ENCODE measurements at regions of chr22 and their contacts with region 1.

Region 1: DNA sequence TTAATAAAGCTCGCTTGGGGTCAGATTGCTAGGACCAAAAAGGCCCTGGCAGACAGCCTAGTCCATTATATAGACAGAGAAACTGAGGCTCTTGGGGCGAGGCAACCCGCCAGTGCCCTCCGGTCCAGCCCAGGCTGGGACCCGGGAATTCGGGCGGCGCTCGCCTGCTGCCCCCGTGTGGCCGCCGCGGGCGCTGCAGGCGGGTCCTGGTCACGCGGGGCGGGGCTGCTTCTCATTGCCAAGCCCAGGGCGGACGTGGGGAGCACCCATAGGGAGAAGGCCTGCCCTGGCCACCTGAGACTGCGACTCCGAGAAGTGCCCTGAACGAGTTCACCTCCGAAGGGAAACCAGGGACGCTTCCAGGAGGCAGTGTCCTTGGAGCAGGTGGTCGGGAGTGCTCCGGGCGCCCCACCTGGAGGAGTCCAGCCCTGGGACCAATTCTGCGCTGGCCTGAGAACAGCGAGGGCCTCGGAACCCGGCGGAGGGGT is 36.0 kb upstream of the CSNK1E start:
- DNase-seq: peak; percentile 46 to 87 (median 69)
- ATAC-seq: peak; percentile 98
- H3K4me3 ChIP-seq: no peak overlapping the region
- H3K4me3 Mint-ChIP-seq: no peak overlapping the region
- H3K27ac ChIP-seq: no peak overlapping the region
- H3K27ac Mint-ChIP-seq: no peak overlapping the region
- H3K4me1 ChIP-seq: peaks cover 6% of the 10 kb centered on the region
- H3K4me1 Mint-ChIP-seq: no peaks in the 10 kb centered on the region
- H3K27me3 ChIP-seq: no peaks in the 10 kb centered on the region
- H3K27me3 Mint-ChIP-seq: no peaks in the 10 kb centered on the region
- CTCF ChIP-seq: peak; percentile 99

Region 2: GRCh38 chr22:38056969-38057891 is 296.0 kb before region 1 on chr22 and contains the start of gene PICK1:
- CTCF ChIA-PET with region 1: interaction called, 44 read pairs
- POLR2A ChIA-PET with region 1: no interaction called
- intact Hi-C with region 1: loop called (anchors 1 kb)
- DNase-seq: peak; percentile 56 to 89 (median 77)
- ATAC-seq: peak; percentile 80
- H3K4me3 ChIP-seq: peak within 1 kb of the TSS; percentile 83 to 97
- H3K4me3 Mint-ChIP-seq: peak within 1 kb of the TSS; percentile 98
- H3K27ac ChIP-seq: peak within 1 kb of the TSS; percentile 79 to 91
- H3K27ac Mint-ChIP-seq: peak within 1 kb of the TSS; percentile 98
- H3K4me1 ChIP-seq: peaks cover 15% of the 10 kb centered on the region
- H3K4me1 Mint-ChIP-seq: peaks cover 19% of the 10 kb centered on the region
- H3K27me3 ChIP-seq: no peaks in the 10 kb centered on the region
- H3K27me3 Mint-ChIP-seq: no peaks in the 10 kb centered on the region
- CTCF ChIP-seq: no peak
- total RNA-seq, gene PICK1: 23.1 to 24.8 TPM

Region 3: DNA sequence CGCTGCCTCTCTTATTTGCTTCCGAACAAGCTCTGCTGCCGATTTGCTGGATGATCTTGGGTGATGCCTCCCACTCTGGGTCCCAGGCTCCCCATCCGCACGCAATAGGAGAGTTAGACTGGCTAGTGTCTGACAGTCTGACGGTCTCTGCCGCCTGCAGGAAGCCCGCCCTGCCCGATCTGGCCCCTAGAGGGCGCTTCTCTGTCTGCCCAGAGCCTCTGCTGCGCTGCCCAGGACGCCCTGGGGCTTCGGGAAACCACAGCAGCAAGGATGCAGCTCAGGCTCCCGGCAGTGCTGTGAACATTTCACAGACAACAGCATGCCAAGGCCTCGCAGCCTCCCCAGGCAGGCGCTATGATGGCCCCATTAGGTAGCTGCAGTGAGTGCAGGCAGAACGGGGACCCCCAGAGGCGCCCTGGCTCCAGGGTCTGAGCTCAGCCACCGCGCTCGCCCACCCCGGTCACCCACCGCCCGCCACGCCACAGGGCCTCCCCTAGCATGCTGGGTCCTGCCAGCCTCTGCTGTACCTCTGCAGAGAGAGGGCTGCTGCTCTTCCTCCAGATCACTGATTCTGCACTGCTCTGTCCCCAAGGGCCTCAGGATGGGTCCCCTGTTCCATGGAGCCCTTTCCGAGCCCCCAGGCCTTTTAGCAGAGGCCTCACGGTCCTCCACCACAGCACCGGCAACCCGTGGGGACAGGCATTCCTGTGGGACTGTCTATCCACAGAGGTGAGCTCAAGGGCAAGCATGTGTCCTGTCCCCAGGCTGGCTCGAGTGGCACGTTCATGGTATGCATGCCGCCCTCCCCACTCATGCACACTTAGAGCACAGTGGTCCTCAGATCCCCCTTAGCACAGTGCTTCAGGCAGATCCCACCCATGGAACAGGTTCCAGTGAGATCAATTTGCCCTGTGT is 238.4 kb before region 1 on chr22:
- CTCF ChIA-PET with region 1: no interaction called
- POLR2A ChIA-PET with region 1: no interaction called
- intact Hi-C with region 1: loop called in 1 of 2 experiments (anchors 1 kb)
- DNase-seq: peak; percentile 61 to 85 (median 74)
- ATAC-seq: peak; percentile 95
- H3K4me3 ChIP-seq: no peak overlapping the region
- H3K4me3 Mint-ChIP-seq: no peak overlapping the region
- H3K27ac ChIP-seq: no peak overlapping the region
- H3K27ac Mint-ChIP-seq: no peak overlapping the region
- H3K4me1 ChIP-seq: no peaks in the 10 kb centered on the region
- H3K4me1 Mint-ChIP-seq: peaks cover 2% of the 10 kb centered on the region
- H3K27me3 ChIP-seq: no peaks in the 10 kb centered on the region
- H3K27me3 Mint-ChIP-seq: no peaks in the 10 kb centered on the region
- CTCF ChIP-seq: peak; percentile 84

Region 4: GRCh38 chr22:38262051-38262795 is 91.0 kb before region 1 on chr22:
- CTCF ChIA-PET with region 1: interaction called, 4 read pairs
- POLR2A ChIA-PET with region 1: no interaction called
- intact Hi-C with region 1: loop called (anchors 1 kb)
- DNase-seq: peak in 6 of 9 experiments; percentile 42 to 61 (median 48)
- ATAC-seq: no peak
- H3K4me3 ChIP-seq: no peak overlapping the region
- H3K4me3 Mint-ChIP-seq: no peak overlapping the region
- H3K27ac ChIP-seq: no peak overlapping the region
- H3K27ac Mint-ChIP-seq: no peak overlapping the region
- H3K4me1 ChIP-seq: peaks cover 20% of the 10 kb centered on the region
- H3K4me1 Mint-ChIP-seq: peaks cover 42% of the 10 kb centered on the region
- H3K27me3 ChIP-seq: no peaks in the 10 kb centered on the region
- H3K27me3 Mint-ChIP-seq: no peaks in the 10 kb centered on the region
- CTCF ChIP-seq: peak; percentile 38

Region 5: GRCh38 chr22:38298312-38299000 is 54.7 kb before region 1 on chr22:
- CTCF ChIA-PET with region 1: interaction called, 20 read pairs
- POLR2A ChIA-PET with region 1: no interaction called
- intact Hi-C with region 1: loop called (anchors 1 kb)
- DNase-seq: peak in 6 of 9 experiments; percentile 43 to 67 (median 60)
- ATAC-seq: peak; percentile 84
- H3K4me3 ChIP-seq: no peak overlapping the region
- H3K4me3 Mint-ChIP-seq: no peak overlapping the region
- H3K27ac ChIP-seq: no peak overlapping the region
- H3K27ac Mint-ChIP-seq: no peak overlapping the region
- H3K4me1 ChIP-seq: no peaks in the 10 kb centered on the region
- H3K4me1 Mint-ChIP-seq: no peaks in the 10 kb centered on the region
- H3K27me3 ChIP-seq: no peaks in the 10 kb centered on the region
- H3K27me3 Mint-ChIP-seq: no peaks in the 10 kb centered on the region
- CTCF ChIP-seq: peak; percentile 57

Region 6: GRCh38 chr22:38317122-38317994 is 35.8 kb before region 1 on chr22 and contains the start of gene CSNK1E:
- CTCF ChIA-PET with region 1: interaction called, 3 read pairs
- POLR2A ChIA-PET with region 1: no interaction called
- intact Hi-C with region 1: loop called in 1 of 2 experiments (anchors 2 kb)
- DNase-seq: peak; percentile 39 to 85 (median 73)
- ATAC-seq: peak; percentile 61
- H3K4me3 ChIP-seq: peak within 1 kb of the TSS; percentile 59 to 60
- H3K4me3 Mint-ChIP-seq: peak within 1 kb of the TSS; percentile 88
- H3K27ac ChIP-seq: peak within 1 kb of the TSS; percentile 80 to 89
- H3K27ac Mint-ChIP-seq: peak within 1 kb of the TSS; percentile 96
- H3K4me1 ChIP-seq: peaks cover 43% of the 10 kb centered on the region
- H3K4me1 Mint-ChIP-seq: peaks cover 45% of the 10 kb centered on the region
- H3K27me3 ChIP-seq: no peaks in the 10 kb centered on the region
- H3K27me3 Mint-ChIP-seq: no peaks in the 10 kb centered on the region
- CTCF ChIP-seq: no peak
- total RNA-seq, gene CSNK1E: 172 to 178 TPM

Region 7: DNA sequence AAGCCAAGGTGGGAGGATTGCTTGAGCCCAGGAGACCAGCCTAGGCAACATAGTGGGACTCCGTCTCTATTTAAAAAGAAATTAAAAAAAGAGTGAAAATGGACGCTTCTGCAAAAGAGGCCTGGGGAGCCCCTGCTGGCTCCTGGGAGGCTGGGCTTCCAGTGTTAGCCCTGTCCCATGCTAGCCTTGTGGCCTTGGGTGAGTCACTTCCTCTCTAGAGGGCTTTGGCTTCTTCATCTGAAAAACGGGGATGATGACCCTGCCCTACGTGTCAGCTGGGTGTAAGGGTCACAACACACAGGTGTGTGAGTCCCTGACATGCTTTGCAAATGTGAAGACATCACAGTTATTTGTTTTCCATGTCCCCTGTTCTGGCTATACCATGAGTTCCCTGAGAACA is 270.2 kb after region 1 on chr22:
- CTCF ChIA-PET with region 1: no interaction called
- POLR2A ChIA-PET with region 1: no interaction called
- intact Hi-C with region 1: no loop called
- DNase-seq: no peak
- ATAC-seq: no peak
- H3K4me3 ChIP-seq: no peak overlapping the region
- H3K4me3 Mint-ChIP-seq: no peak overlapping the region
- H3K27ac ChIP-seq: no peak overlapping the region
- H3K27ac Mint-ChIP-seq: no peak overlapping the region
- H3K4me1 ChIP-seq: no peaks in the 10 kb centered on the region
- H3K4me1 Mint-ChIP-seq: no peaks in the 10 kb centered on the region
- H3K27me3 ChIP-seq: no peaks in the 10 kb centered on the region
- H3K27me3 Mint-ChIP-seq: peaks cover 6% of the 10 kb centered on the region
- CTCF ChIP-seq: no peak